GM23248 (cell line): ENCODE measurements at regions of chr16 and their contacts with region 1.

Region 1: GRCh38 chr16:82263521-82264143 is 93.6 kb upstream of the MPHOSPH6 start:
- DNase-seq: peak; percentile 64
- H3K4me3 ChIP-seq: no peak overlapping the region
- H3K27ac ChIP-seq: no peak overlapping the region
- H3K4me1 ChIP-seq: no peaks in the 10 kb centered on the region
- H3K27me3 ChIP-seq: peaks cover 52% of the 10 kb centered on the region

Region 2: DNA sequence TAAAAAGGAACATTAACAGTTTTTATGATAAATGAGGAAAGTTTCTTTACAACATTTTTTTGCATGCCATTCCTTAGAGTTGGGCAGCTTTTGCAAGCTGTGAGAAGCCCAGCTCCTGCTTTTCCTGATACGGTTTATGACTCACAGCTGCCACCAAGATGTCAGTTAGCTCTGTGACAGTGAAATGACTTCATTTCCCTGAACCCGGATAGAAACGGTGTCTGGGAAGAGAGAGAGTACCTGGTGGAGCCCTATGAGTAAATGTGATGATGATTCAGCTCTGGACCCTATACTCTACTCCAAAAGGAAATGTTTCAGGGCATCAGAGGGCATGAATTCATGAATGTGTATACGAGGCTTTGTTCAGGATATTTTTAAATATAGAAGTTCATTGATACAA is 1177.9 kb after region 1 on chr16:
- in situ Hi-C with region 1: loop called (anchors 25 kb)
- DNase-seq: peak; percentile 20
- H3K4me3 ChIP-seq: no peak overlapping the region
- H3K27ac ChIP-seq: no peak overlapping the region
- H3K4me1 ChIP-seq: peaks cover 7% of the 10 kb centered on the region; the same call in 1 of the 2 replicates
- H3K27me3 ChIP-seq: no peaks in the 10 kb centered on the region